Activated CD4-positive, alpha-beta T cell treated with anti-CD3 and anti-CD28 coated beads for 36 hours (primary cell): ENCODE measurements at regions of chr2 and their contacts with region 1.

Region 1: DNA sequence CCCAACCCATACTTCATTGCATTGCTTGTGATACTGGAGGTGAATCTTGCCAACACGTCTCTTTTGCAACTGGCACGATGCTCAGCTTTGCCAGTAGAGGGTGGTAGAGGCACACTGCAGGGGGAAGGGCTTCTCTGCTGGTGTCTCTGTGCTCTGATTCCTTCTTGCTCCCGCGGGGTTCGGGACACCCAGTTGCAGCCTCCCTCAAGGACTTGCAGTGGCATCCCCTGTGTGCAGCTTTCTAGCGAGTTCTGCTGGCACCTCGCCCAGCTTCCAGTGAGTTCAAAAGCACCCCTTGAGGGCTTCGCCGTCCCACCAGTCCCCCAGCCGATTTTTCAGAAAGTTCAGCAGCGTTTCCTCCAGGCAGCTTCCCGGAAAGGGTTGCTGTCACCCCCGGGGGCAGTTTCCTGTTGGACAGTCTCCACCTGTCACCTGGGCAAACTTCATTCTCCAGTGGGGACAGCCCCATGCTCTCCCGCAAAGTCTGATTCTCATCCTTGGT is 35.3 kb upstream of the EN1 start:
- DNase-seq: peak; percentile 82
- ATAC-seq: peak; percentile 89
- H3K4me3 Mint-ChIP-seq: peak overlapping the region; percentile 71
- H3K27ac Mint-ChIP-seq: peak overlapping the region; percentile 69
- H3K4me1 Mint-ChIP-seq: peaks cover 19% of the 10 kb centered on the region
- H3K27me3 Mint-ChIP-seq: peaks cover 7% of the 10 kb centered on the region

Region 2: DNA sequence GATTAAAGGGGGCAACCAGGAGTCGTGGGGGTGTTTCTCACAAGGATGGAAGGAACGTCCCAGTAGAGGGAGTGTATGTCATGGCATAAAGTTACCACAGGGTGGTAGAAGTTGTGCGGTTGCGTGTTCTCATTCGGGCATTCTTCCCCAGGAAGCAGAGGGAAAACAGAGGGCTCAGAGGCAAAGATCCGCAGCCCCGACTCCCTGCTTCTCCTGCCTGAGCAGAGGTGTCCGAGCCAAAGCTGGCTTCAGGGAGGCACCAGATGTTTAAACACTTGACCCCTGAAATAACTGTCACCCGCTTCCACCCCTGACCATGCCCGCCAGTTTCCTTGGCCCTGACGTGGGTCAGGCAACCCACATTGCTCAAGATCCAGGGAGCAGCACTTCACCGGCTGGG is 119.0 kb before region 1 on chr2:
- CTCF ChIA-PET with region 1: no interaction called
- POLR2A ChIA-PET with region 1: no interaction called
- intact Hi-C with region 1: no loop called
- DNase-seq: no peak
- ATAC-seq: no peak
- H3K4me3 Mint-ChIP-seq: no peak overlapping the region
- H3K27ac Mint-ChIP-seq: no peak overlapping the region
- H3K4me1 Mint-ChIP-seq: no peaks in the 10 kb centered on the region
- H3K27me3 Mint-ChIP-seq: peaks cover 41% of the 10 kb centered on the region

Region 3: GRCh38 chr2:118865106-118865505 is 17.7 kb before region 1 on chr2:
- CTCF ChIA-PET with region 1: interaction called, 23 read pairs
- POLR2A ChIA-PET with region 1: interaction called, 3 read pairs
- intact Hi-C with region 1: no loop called
- DNase-seq: peak; percentile 39
- ATAC-seq: peak; percentile 80
- H3K4me3 Mint-ChIP-seq: no peak overlapping the region
- H3K27ac Mint-ChIP-seq: no peak overlapping the region
- H3K4me1 Mint-ChIP-seq: no peaks in the 10 kb centered on the region
- H3K27me3 Mint-ChIP-seq: peaks cover 29% of the 10 kb centered on the region

Region 4: DNA sequence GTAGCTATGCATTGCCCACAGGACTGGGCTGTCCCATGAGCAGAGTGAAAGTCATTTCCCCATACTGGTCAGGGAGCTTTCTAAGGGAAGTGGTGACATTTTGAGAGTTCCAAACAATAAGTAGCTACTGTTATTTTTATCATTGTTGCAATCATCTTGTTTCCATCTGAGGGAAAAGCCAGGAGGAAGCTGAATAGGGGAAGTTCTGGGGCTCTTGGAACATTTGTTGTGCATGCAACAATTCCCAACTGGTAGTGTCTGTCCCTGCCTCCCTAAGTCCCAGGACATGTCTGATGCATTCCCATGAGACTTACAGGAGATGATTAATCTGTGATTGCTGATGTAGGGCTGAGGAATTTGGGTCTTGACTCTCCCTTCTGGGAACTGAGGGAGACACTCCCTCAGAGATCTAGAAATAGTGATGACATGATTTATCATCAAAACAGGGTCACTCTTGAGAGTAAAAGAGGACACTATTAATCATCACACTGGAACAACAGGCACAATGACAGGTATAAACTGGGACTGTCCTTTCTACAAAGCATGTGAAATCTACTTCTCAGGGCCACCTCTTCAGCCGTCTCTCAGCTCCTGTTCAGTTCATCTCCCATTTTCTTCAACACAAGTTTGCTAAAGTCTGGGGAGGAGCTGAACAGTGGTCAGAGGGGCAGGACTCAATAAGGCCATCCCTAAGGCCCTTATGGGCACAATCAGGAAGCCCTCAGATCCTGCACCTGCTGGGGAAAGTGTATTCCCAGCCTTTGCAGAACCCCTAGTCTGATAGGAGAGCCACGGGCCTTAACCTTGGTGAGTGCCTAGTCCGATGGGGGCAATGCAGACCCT is 31.3 kb after region 1 on chr2:
- CTCF ChIA-PET with region 1: interaction called, 13 read pairs
- POLR2A ChIA-PET with region 1: no interaction called
- intact Hi-C with region 1: no loop called
- DNase-seq: no peak
- ATAC-seq: no peak
- H3K4me3 Mint-ChIP-seq: no peak overlapping the region
- H3K27ac Mint-ChIP-seq: no peak overlapping the region
- H3K4me1 Mint-ChIP-seq: no peaks in the 10 kb centered on the region
- H3K27me3 Mint-ChIP-seq: peaks cover 3% of the 10 kb centered on the region

Region 5: GRCh38 chr2:118940486-118941205 is 57.9 kb after region 1 on chr2:
- CTCF ChIA-PET with region 1: no interaction called
- POLR2A ChIA-PET with region 1: no interaction called
- intact Hi-C with region 1: no loop called
- DNase-seq: no peak
- ATAC-seq: no peak
- H3K4me3 Mint-ChIP-seq: no peak overlapping the region
- H3K27ac Mint-ChIP-seq: no peak overlapping the region
- H3K4me1 Mint-ChIP-seq: peaks cover 9% of the 10 kb centered on the region
- H3K27me3 Mint-ChIP-seq: peaks cover 7% of the 10 kb centered on the region

Region 6: GRCh38 chr2:119011162-119011909 is 128.6 kb after region 1 on chr2:
- CTCF ChIA-PET with region 1: interaction called, 6 read pairs
- POLR2A ChIA-PET with region 1: no interaction called
- intact Hi-C with region 1: loop called (anchors 2 to 5 kb)
- DNase-seq: peak; percentile 58
- ATAC-seq: no peak
- H3K4me3 Mint-ChIP-seq: no peak overlapping the region
- H3K27ac Mint-ChIP-seq: no peak overlapping the region
- H3K4me1 Mint-ChIP-seq: no peaks in the 10 kb centered on the region
- H3K27me3 Mint-ChIP-seq: peaks cover 25% of the 10 kb centered on the region

Region 7: GRCh38 chr2:119126650-119127049 is 243.9 kb after region 1 on chr2:
- CTCF ChIA-PET with region 1: interaction called, 8 read pairs
- POLR2A ChIA-PET with region 1: no interaction called
- intact Hi-C with region 1: loop called (anchors 1 to 5 kb)
- DNase-seq: peak; percentile 66
- ATAC-seq: peak; percentile 47
- H3K4me3 Mint-ChIP-seq: no peak overlapping the region
- H3K27ac Mint-ChIP-seq: no peak overlapping the region
- H3K4me1 Mint-ChIP-seq: no peaks in the 10 kb centered on the region
- H3K27me3 Mint-ChIP-seq: peaks cover 10% of the 10 kb centered on the region

Region 8: GRCh38 chr2:119264781-119265692 is 382.3 kb after region 1 on chr2:
- CTCF ChIA-PET with region 1: interaction called, 10 read pairs
- POLR2A ChIA-PET with region 1: no interaction called
- intact Hi-C with region 1: loop called (anchors 1 to 5 kb)
- DNase-seq: peak; percentile 62
- ATAC-seq: peak; percentile 74
- H3K4me3 Mint-ChIP-seq: no peak overlapping the region
- H3K27ac Mint-ChIP-seq: no peak overlapping the region
- H3K4me1 Mint-ChIP-seq: no peaks in the 10 kb centered on the region
- H3K27me3 Mint-ChIP-seq: no peaks in the 10 kb centered on the region